ENCODE measurements at regions of chr20 and their contacts with region 1.

Region 1: DNA sequence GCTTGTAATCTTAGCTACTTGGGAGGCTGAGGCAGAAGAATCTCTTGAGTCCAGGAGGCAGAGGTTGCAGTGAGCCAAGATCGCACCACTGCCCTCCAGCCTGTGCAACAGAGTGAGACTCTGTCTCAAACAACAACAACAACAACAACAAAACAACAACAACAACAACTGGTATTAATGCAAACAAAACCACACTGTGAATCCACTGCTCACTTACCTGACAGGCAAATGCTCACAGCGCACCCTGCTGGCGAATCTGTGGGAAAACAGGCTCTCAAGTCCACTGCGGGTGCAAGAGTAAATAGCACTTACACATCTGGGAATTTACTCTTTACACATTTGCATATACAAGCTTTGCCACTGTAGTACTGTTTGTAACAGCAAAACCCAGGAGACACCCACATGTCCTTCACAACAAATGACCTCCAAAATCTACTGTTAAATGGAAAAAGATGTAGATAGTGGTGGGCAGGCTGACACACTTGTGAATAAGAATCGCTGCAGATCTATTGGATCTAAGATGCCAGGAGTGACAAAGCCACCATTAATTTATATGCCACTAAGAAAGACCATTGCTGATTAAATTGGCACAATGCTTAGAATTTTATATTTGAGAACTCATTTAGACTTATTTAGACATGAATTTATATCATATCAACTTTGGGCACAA is 29.3 kb downstream of the NSFL1C start:
- DNase-seq: peak; percentile 63 to 64
- ATAC-seq: peak; percentile 78

Region 2: GRCh38 chr20:1266167-1266973 is 171.0 kb before region 1 on chr20 and contains the start of gene SNPH:
- intact Hi-C with region 1: no loop called
- DNase-seq: peak; percentile 78 to 83
- ATAC-seq: peak; percentile 95
- total RNA-seq, gene SNPH: 1.4 to 2.4 TPM

Region 3: GRCh38 chr20:1313236-1313964 is 124.0 kb before region 1 on chr20:
- intact Hi-C with region 1: loop called (anchors 5 kb)
- DNase-seq: peak in 1 of 2 donors; percentile 76
- ATAC-seq: peak; percentile 65

Region 4: GRCh38 chr20:1830240-1830639 is 392.9 kb after region 1 on chr20:
- intact Hi-C with region 1: no loop called
- DNase-seq: peak in 1 of 2 donors; percentile 16
- ATAC-seq: no peak